ENCODE measurements at regions of chr7 and their contacts with region 1.

Region 1: DNA sequence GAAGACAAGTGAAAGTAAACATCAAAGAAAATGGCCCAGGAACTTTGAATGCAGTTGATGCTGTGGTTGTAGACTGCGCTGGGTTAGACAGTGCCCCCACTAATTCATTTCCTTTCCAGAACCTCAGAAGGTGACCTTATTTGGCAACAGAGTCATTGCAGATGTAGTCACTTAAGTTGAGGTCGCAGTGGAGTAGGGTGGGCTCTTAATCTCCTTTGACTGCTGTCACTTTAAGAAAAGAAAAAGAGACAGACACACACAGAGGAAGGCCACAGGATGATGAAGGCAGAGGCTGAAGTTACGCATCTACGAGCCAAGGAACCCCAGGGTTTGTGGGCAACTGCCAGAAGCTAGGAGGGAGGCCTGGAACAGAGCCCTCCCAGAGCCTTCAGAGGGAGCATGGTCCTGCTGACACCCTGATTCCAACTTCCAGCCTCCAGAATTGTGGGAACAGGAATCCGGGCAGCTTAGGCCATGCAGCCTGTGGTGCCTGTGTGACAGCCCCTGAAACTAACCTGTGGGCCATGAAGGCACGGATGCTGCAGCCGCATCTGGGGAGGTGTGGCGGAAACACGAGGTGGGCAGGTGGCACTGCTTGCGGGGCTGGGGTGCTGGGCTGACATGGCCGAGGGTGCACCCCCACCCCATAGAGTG is 107.6 kb downstream of the PRKAG2 start:
- DNase-seq: peak in 13 of 14 experiments; percentile 15 to 81 (median 26)
- ATAC-seq: peak; percentile 88
- H3K4me3 ChIP-seq: peak overlapping the region; percentile 33
- H3K4me3 Mint-ChIP-seq: peak overlapping the region; percentile 54
- H3K27ac ChIP-seq: peak overlapping the region; percentile 68 to 80
- H3K27ac Mint-ChIP-seq: peak overlapping the region; percentile 89
- H3K4me1 ChIP-seq: peaks cover 58% of the 10 kb centered on the region
- H3K4me1 Mint-ChIP-seq: peaks cover 64% of the 10 kb centered on the region
- H3K27me3 ChIP-seq: no peaks in the 10 kb centered on the region
- H3K27me3 Mint-ChIP-seq: no peaks in the 10 kb centered on the region
- CTCF ChIP-seq: no peak

Region 2: GRCh38 chr7:151711906-151712809 is 57.2 kb before region 1 on chr7:
- CTCF ChIA-PET with region 1: no interaction called
- POLR2A ChIA-PET with region 1: no interaction called
- intact Hi-C with region 1: loop called in 1 of 2 experiments (anchors 10 kb)
- DNase-seq: no peak
- ATAC-seq: no peak
- H3K4me3 ChIP-seq: no peak overlapping the region
- H3K4me3 Mint-ChIP-seq: no peak overlapping the region
- H3K27ac ChIP-seq: no peak overlapping the region
- H3K27ac Mint-ChIP-seq: no peak overlapping the region
- H3K4me1 ChIP-seq: no peaks in the 10 kb centered on the region
- H3K4me1 Mint-ChIP-seq: peaks cover 5% of the 10 kb centered on the region
- H3K27me3 ChIP-seq: no peaks in the 10 kb centered on the region
- H3K27me3 Mint-ChIP-seq: no peaks in the 10 kb centered on the region
- CTCF ChIP-seq: no peak

Region 3: GRCh38 chr7:152054367-152055230 is 285.3 kb after region 1 on chr7:
- CTCF ChIA-PET with region 1: no interaction called
- POLR2A ChIA-PET with region 1: no interaction called
- intact Hi-C with region 1: no loop called
- DNase-seq: no peak
- ATAC-seq: no peak
- H3K4me3 ChIP-seq: no peak overlapping the region
- H3K4me3 Mint-ChIP-seq: no peak overlapping the region
- H3K27ac ChIP-seq: no peak overlapping the region
- H3K27ac Mint-ChIP-seq: no peak overlapping the region
- H3K4me1 ChIP-seq: no peaks in the 10 kb centered on the region
- H3K4me1 Mint-ChIP-seq: peaks cover 5% of the 10 kb centered on the region
- H3K27me3 ChIP-seq: no peaks in the 10 kb centered on the region
- H3K27me3 Mint-ChIP-seq: no peaks in the 10 kb centered on the region
- CTCF ChIP-seq: no peak

Measured in CD4-positive, alpha-beta T cell (primary cell).